ENCODE measurements at regions of chr9 and their contacts with region 1.

Region 1: GRCh38 chr9:114174876-114175771 is 19.8 kb downstream of the COL27A1 start:
- DNase-seq: peak in 1 of 2 donors; percentile 45
- ATAC-seq: peak; percentile 26 to 28
- H3K4me3 ChIP-seq: no peak overlapping the region
- H3K27ac ChIP-seq: peak overlapping the region; percentile 27 to 75 (median 58)
- H3K4me1 ChIP-seq: peaks cover 47 to 56% of the 10 kb centered on the region in 2 donors
- H3K27me3 ChIP-seq: no peaks in the 10 kb centered on the region
- CTCF ChIP-seq: no peak
- POLR2A ChIP-seq: no peak

Region 2: GRCh38 chr9:114121227-114122135 is 53.6 kb before region 1 on chr9:
- in situ Hi-C with region 1: no loop called
- intact Hi-C with region 1: no loop called
- DNase-seq: no peak
- ATAC-seq: no peak
- H3K4me3 ChIP-seq: no peak overlapping the region
- H3K27ac ChIP-seq: no peak overlapping the region
- H3K4me1 ChIP-seq: no peaks in the 10 kb centered on the region
- H3K27me3 ChIP-seq: peaks cover 0 to under 1% (median 0%) of the 10 kb centered on the region in 3 donors
- CTCF ChIP-seq: no peak
- POLR2A ChIP-seq: no peak

Region 3: DNA sequence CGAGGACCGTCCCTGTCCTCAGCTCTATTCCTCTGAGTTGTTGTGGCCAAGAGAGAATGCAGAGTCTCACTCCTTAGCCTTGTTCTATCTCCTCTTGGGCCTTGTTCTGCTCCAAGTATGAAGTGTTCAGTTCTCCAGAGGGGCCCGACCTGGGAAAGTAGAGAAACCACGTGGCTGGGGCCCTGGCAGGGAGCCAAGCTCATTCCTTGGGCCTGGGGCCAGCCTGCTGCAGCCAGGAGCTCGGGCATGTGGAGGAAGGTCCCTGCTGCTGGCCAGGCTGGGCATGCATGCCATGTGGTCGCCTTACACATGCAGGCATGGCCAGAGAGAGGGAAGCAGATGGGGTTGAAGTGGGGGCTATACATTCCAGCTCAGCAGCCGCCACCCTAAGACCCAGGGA is 41.0 kb after region 1 on chr9:
- in situ Hi-C with region 1: loop called in 1 of 4 experiments (anchors 5 kb)
- intact Hi-C with region 1: no loop called
- DNase-seq: peak in 1 of 2 donors; percentile 41
- ATAC-seq: peak in 1 of 2 donors; percentile 16
- H3K4me3 ChIP-seq: no peak overlapping the region
- H3K27ac ChIP-seq: peak overlapping the region in 1 of 4 donors; percentile 50
- H3K4me1 ChIP-seq: peaks cover 16 to 20% of the 10 kb centered on the region in 2 donors
- H3K27me3 ChIP-seq: no peaks in the 10 kb centered on the region
- CTCF ChIP-seq: no peak
- POLR2A ChIP-seq: no peak

Region 4: GRCh38 chr9:114271641-114272081 is 96.5 kb after region 1 on chr9:
- in situ Hi-C with region 1: no loop called
- intact Hi-C with region 1: no loop called
- DNase-seq: peak; percentile 27 to 57
- ATAC-seq: peak; percentile 70 to 82
- H3K4me3 ChIP-seq: no peak overlapping the region
- H3K27ac ChIP-seq: no peak overlapping the region
- H3K4me1 ChIP-seq: peaks cover under 1 to 2% of the 10 kb centered on the region in 2 donors
- H3K27me3 ChIP-seq: no peaks in the 10 kb centered on the region
- CTCF ChIP-seq: peak; percentile 47 to 74 (median 63)
- POLR2A ChIP-seq: no peak